Posterior vena cava (tissue), 2 donors: ENCODE measurements at regions of chr7 and their contacts with region 1.

Region 1: GRCh38 chr7:20952916-20953315 is 166.2 kb upstream of the SP8 start:
- DNase-seq: no peak

Region 2: GRCh38 chr7:19919261-19920095 is 1033.4 kb before region 1 on chr7:
- intact Hi-C with region 1: no loop called
- DNase-seq: no peak

Region 3: DNA sequence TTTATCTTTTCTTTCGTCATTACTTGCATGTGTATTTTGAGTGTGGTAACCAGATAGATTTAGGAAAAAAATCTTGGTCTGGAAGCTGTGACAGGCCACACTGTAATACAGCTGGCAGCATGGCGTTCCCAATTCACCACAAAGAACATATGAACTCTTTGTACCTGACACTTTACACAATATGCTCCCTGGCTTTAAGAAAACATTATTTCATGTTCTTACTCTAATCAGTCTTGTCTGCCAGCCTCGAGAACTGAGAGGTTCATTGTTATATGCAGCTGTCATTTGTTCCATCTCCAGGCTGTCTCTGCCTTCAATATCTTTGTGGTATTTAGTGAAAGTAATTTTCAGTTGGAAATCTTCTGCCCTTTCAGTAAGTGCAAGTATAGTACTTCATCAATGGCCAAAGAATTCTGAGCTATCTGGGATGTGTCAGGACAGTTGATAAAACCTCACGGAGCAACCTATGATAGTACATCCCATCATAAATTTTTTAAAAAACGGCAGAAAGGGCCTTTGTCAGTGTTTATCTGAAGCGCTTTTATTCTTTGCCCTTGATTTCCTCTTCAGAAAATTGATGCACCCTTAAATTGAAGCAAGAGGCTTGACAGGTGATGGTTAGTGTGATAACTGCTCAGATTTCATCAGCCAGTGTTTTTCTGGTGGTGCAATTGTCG is 20.0 kb before region 1 on chr7:
- intact Hi-C with region 1: loop called in 1 of 2 experiments (anchors 1 kb)
- DNase-seq: no peak

Region 4: GRCh38 chr7:21365866-21366624 is 413.1 kb after region 1 on chr7:
- intact Hi-C with region 1: no loop called
- DNase-seq: no peak